Activated CD8-positive, alpha-beta T cell treated with anti-CD3 and anti-CD28 coated beads, Interleukin-2, amount 10 ng/mL, durations not matched to agents 7 days and 5 days (primary cell): ENCODE measurements at regions of chr11 and their contacts with region 1.

Region 1: DNA sequence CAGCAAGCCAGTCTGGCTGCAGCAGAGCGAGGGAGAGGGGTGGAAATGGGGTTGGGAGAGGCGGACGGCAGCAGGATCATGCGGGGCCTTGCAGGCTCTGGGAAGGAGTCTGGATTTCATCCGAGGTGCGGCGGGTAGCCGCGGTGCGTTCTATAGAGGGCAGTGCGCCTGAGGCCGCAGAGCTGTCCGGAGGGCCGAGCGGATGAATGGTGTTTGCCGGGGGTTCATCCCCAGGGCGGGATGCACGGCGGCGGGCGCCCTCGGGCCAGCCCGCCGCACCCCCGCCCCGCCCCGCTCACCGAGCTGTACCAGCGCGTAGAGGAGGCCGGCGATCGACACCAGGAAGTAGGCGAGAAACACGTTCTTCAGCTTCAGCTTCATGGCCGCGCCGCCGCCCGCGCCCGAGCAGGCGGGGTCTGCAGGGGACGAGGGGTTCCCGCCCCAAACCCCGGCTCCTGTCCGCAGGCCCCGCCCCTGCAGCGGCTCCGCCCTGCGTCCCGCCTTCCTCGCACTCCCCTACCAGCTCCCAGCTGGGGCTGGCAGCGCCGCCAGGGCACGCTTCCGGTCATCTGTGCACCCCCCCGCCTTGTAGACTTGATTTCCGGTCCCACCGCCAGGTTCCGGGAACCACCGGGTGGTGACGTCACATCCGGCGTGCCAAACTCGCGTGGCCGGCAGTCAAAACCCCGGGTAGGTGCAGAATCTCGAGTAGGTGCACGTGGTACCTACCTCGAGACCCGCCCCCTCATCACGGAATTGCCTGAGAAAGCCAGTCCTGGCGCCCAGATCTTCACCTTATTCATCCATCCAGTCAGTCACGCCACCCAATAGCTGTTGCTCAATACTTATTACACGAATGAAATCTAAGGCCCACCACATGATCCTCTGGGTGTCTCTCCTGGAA is at the start of gene B3GAT3:
- DNase-seq: peak; percentile 98
- ATAC-seq: peak; percentile 90
- H3K4me3 Mint-ChIP-seq: peak within 1 kb of the TSS; percentile 86
- H3K27ac Mint-ChIP-seq: peak within 1 kb of the TSS; percentile 97
- H3K4me1 Mint-ChIP-seq: peaks cover 29% of the 10 kb centered on the region
- H3K27me3 Mint-ChIP-seq: no peaks in the 10 kb centered on the region
- total RNA-seq, gene B3GAT3: 63.0 to 64.8 TPM

Region 2: GRCh38 chr11:62472012-62472884 is 149.6 kb before region 1 on chr11:
- CTCF ChIA-PET with region 1: no interaction called
- POLR2A ChIA-PET with region 1: no interaction called
- DNase-seq: no peak
- ATAC-seq: no peak
- H3K4me3 Mint-ChIP-seq: no peak overlapping the region
- H3K27ac Mint-ChIP-seq: peak overlapping the region; percentile 14
- H3K4me1 Mint-ChIP-seq: peaks cover 6% of the 10 kb centered on the region
- H3K27me3 Mint-ChIP-seq: no peaks in the 10 kb centered on the region

Region 3: DNA sequence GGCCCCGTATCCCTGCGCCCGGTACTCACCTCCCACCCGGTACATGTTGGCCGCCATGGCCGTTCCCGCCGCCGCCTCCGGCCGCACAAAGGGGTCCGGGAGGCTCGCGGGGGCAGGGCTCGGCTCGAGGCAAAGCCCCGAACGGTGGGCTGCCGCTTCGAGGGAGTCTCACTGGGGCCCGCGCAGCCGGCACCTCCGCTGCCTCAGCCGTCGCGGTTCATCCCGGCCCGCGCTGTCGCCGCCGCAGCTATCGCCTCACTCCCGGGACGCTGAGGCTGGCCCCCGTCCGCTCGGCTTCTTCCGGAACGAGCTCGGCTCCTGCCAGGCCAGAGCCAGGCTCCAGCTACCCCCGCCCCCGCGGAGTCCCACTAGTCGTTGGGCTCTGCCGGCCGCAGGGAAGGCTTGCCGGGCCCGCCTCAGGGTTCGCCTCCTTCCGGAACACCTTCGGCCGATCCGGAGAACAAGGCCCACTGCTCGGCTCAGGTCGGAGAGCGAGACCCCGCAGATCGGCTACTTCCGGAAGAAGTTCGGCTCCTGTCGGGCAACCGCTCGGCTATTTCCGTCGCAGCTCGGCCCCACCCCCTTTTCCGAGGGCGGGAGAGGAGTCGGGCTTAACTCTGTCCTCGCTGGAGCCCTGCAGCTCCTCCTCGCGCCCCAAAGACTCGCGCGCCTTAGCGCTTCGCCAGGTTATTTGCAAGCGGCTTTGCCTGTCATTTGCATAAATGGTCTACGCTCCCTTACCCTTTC is 20.3 kb before region 1 on chr11 and contains the start of gene MTA2:
- CTCF ChIA-PET with region 1: interaction called, 9 read pairs
- POLR2A ChIA-PET with region 1: interaction called, 25 read pairs
- DNase-seq: peak; percentile 100
- ATAC-seq: peak; percentile 88
- H3K4me3 Mint-ChIP-seq: peak within 1 kb of the TSS; percentile 89
- H3K27ac Mint-ChIP-seq: peak within 1 kb of the TSS; percentile 88
- H3K4me1 Mint-ChIP-seq: peaks cover 52% of the 10 kb centered on the region
- H3K27me3 Mint-ChIP-seq: no peaks in the 10 kb centered on the region
- total RNA-seq, gene MTA2: 249 to 273 TPM

Region 4: DNA sequence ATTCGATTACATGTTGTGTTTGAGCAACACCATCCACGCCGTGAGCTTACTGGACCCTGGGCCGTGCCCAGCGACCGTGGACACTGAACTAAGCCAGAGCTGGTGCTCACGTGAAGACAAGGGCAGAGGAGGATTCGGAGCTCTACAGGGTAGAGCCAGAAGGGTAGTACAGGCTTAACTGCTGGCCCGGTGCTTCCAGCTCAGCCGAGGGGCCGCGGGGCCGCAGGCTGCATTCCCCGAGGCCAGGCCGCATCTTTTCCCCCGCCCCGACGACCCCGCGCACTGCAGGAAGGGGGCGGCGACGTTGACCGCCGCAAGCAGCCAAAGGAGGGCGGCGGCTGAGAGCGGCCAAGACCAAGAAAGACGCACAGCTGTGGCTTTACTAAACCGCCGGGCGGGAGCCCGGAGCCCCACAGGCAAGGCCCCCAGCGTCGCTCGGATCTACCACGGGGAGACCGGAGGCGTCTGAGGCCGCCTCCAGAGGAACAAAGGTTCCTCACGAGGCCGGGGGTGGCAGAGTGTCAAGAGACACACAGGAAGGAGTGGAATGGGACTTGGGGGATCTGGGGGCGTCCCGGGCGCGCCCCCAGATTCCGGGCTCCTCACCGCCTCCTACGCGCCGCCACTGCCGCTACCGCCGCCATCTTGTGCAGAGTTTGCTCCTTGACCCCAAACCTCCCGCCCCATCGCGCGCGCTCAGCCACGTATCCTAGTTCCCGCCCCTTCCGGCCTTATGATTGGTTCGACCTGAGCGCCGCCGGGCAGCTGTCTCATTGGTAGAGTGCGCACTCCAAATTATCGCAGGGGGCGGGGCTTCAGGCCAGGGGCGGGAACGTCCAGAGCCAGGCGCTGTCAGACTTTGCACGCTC is 24.4 kb after region 1 on chr11 and contains the start of gene GANAB:
- CTCF ChIA-PET with region 1: interaction called, 8 read pairs
- POLR2A ChIA-PET with region 1: interaction called, 14 read pairs
- DNase-seq: peak; percentile 100
- ATAC-seq: peak; percentile 98
- H3K4me3 Mint-ChIP-seq: peak within 1 kb of the TSS; percentile 99
- H3K27ac Mint-ChIP-seq: peak within 1 kb of the TSS; percentile 96
- H3K4me1 Mint-ChIP-seq: peaks cover 32% of the 10 kb centered on the region
- H3K27me3 Mint-ChIP-seq: no peaks in the 10 kb centered on the region
- total RNA-seq, gene GANAB: 297 to 310 TPM

Region 5: DNA sequence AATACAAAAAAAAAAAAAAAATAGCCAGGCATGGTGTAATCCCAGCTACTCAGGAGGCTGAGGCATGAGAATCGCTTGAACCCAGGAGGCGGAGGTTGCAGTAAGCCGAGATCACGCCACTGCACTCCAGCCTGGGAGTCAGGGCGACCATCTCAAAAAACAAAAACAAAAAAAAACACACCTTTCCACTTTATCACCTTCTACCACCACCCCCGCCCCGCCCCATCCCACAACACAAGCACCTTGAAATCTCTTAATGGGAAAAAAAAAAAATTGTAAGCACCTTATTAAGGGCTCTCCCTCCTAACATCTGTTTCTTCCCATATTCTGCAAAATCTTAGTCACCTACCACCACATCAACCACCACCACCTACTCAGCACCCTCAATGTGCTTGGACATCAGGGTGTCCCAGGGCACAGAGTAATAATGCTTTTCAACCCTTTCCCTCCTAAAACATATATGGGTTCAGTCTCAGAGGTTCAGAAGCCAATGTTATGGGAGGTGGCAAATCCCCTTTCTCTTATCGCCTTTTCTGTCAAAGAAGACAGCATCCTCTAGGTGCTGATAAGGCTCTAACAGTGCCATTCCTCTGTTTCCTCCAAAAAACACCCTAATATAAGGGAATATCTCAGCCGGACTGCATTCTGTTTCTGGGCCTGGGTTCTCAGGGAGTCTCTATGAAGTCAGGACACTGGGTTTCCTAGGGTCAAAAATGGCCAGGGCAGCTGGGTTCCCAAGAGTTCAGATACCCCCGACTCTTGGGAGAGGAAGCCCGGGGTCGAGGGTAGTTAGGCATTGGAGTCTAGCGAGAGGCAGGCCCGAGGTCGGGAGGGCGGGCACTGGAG is 30.6 kb after region 1 on chr11:
- CTCF ChIA-PET with region 1: no interaction called
- POLR2A ChIA-PET with region 1: interaction called, 12 read pairs
- DNase-seq: no peak
- ATAC-seq: peak; percentile 7
- H3K4me3 Mint-ChIP-seq: peak overlapping the region; percentile 87
- H3K27ac Mint-ChIP-seq: peak overlapping the region; percentile 91
- H3K4me1 Mint-ChIP-seq: peaks cover 26% of the 10 kb centered on the region
- H3K27me3 Mint-ChIP-seq: no peaks in the 10 kb centered on the region